ENCODE measurements at regions of chr18 and their contacts with region 1.

Region 1: GRCh38 chr18:12038639-12039417 is 54.8 kb upstream of the ANKRD62 start:
- DNase-seq: peak; percentile 74
- H3K4me3 Mint-ChIP-seq: peak overlapping the region; percentile 33
- H3K27ac Mint-ChIP-seq: no peak overlapping the region
- H3K4me1 Mint-ChIP-seq: peaks cover 20% of the 10 kb centered on the region
- H3K27me3 Mint-ChIP-seq: no peaks in the 10 kb centered on the region

Region 2: GRCh38 chr18:11733031-11733430 is 305.8 kb before region 1 on chr18:
- CTCF ChIA-PET with region 1: interaction called, 15 read pairs
- POLR2A ChIA-PET with region 1: no interaction called
- DNase-seq: peak; percentile 73
- H3K4me3 Mint-ChIP-seq: peak overlapping the region; percentile 11
- H3K27ac Mint-ChIP-seq: no peak overlapping the region
- H3K4me1 Mint-ChIP-seq: no peaks in the 10 kb centered on the region
- H3K27me3 Mint-ChIP-seq: peaks cover 25% of the 10 kb centered on the region

Region 3: DNA sequence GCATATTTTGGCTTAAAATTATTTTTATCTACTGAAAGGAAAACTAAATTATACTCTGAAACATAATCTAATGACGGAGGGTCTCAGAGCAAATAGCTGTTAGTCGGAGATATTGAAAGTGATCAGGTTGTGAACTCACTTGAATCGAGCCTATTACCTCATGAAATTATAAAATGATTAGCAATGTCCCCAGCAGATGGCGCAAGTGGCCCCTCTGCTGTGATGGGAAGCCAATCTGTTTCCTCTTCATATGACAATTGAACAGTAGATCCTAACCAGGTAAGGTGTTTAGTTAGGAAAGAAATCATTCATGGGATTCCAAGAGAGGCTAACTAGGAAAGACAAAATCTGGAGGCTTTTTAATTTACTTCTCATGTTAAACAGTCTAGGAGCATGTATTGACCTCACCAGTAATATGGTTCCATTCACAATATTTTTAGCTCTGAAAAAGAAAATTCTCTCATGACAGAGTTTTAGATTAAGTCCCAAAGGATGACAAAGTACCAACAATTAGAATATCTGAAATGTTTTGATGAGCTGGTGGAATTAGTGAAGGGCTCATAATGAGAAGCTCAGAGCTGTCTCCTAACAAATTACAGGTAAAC is 100.9 kb before region 1 on chr18:
- CTCF ChIA-PET with region 1: interaction called, 80 read pairs
- POLR2A ChIA-PET with region 1: no interaction called
- DNase-seq: peak; percentile 76
- H3K4me3 Mint-ChIP-seq: no peak overlapping the region
- H3K27ac Mint-ChIP-seq: no peak overlapping the region
- H3K4me1 Mint-ChIP-seq: no peaks in the 10 kb centered on the region
- H3K27me3 Mint-ChIP-seq: no peaks in the 10 kb centered on the region

Region 4: DNA sequence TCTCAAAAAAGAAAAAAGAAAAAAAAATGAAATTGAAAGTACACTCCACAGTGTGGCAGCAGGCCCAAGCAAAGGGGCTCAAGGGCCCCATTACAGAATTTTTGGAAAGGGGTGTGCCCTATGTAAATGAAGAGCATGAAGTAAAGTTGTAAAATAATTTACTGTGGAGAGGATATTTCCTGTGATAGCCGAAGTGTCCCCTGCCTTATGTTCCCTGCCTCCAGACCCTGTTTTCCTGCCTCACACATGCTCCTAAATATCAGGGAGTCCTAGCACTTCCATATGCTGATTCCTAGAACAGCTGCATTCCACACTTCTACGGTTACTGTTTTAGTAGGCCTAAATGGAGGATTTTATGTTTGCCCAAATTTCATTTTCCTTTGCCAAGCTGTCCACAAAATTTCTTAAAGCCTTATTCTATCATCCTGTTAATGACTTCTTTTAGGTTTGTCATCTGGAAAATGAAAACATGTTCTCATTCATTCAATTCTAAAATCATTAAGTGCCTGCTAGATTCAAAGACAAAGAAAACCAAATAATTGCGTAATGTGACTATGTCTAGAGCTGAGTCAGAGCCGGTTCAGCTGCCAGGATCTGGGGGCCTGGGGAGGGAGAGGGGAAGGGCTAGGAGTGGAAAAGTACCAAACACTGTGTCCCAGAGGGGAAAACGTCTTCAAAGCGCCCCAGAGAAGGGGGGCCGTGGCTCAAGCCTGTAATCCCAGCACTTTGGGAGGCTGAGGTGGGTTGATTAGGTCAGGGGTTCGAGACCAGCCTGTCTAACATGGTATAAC is 83.4 kb before region 1 on chr18:
- CTCF ChIA-PET with region 1: no interaction called
- POLR2A ChIA-PET with region 1: no interaction called
- DNase-seq: no peak
- H3K4me3 Mint-ChIP-seq: no peak overlapping the region
- H3K27ac Mint-ChIP-seq: no peak overlapping the region
- H3K4me1 Mint-ChIP-seq: peaks cover 4% of the 10 kb centered on the region
- H3K27me3 Mint-ChIP-seq: no peaks in the 10 kb centered on the region

Region 5: DNA sequence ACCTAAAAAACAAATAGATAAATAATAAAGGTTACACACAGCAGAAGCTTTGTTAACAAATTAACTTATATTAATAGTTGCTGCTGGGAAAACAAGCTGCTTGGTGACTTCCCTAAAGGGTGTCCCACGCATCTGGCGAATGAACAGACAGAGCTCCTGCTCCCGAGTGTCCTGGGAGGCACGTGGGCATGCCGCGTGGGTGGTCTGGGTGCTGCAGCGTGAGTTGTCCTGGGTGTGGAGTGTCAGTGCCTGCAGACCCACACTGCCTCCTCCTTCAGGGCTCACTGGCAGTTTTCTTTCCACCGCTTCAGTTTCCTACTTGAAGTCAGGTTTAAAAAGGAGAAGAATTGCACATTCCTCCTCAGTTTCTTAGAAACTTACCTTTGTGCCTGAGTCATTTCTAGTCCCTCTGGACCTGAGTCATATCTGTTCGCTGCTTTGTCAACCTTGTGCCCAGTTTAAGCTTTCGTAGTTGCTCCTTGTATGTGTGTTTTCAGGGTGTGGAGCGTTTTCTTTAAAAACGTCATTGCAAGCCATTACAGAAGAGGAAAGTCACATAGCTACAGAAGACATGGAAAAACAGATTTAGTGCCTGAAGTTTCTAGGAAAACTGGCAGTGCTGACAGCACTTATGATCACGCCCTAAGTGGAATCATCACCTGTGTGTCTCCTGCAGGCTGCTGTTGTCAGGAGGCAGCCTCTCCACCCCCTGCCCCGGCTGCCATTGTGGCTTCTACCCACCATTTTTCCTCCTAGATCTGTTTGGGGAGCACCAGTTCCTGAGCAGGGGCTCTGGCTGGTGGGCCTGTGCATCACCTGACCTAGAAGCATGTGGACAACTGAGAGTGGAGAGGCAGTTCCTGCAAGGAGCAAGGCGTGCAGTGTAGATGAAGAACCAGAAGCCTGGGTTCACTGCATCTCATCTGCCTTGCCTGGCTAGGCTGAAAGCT is 33.0 kb before region 1 on chr18:
- CTCF ChIA-PET with region 1: no interaction called
- POLR2A ChIA-PET with region 1: no interaction called
- DNase-seq: no peak
- H3K4me3 Mint-ChIP-seq: no peak overlapping the region
- H3K27ac Mint-ChIP-seq: no peak overlapping the region
- H3K4me1 Mint-ChIP-seq: peaks cover 9% of the 10 kb centered on the region
- H3K27me3 Mint-ChIP-seq: no peaks in the 10 kb centered on the region

Region 6: GRCh38 chr18:12028674-12029073 is 10.2 kb before region 1 on chr18:
- CTCF ChIA-PET with region 1: interaction called, 10 read pairs
- POLR2A ChIA-PET with region 1: no interaction called
- DNase-seq: no peak
- H3K4me3 Mint-ChIP-seq: no peak overlapping the region
- H3K27ac Mint-ChIP-seq: no peak overlapping the region
- H3K4me1 Mint-ChIP-seq: peaks cover 3% of the 10 kb centered on the region
- H3K27me3 Mint-ChIP-seq: no peaks in the 10 kb centered on the region

Measured in activated CD4-positive, alpha-beta memory T cell treated with anti-CD3 and anti-CD28 coated beads, Interleukin-2, amount 10 ng/mL, durations not matched to agents 7 days and 5 days (primary cell).